ENCODE measurements at regions of chr10 and their contacts with region 1.

Region 1: GRCh38 chr10:27446091-27446918 is 57.8 kb upstream of the RAB18 start:
- DNase-seq: no peak
- H3K4me3 ChIP-seq: no peak overlapping the region
- H3K27ac ChIP-seq: no peak overlapping the region
- H3K4me1 ChIP-seq: no peaks in the 10 kb centered on the region
- H3K27me3 ChIP-seq: no peaks in the 10 kb centered on the region
- CTCF ChIP-seq: peak; percentile 16 to 46 (median 37)

Region 2: GRCh38 chr10:28393966-28394568 is 947.8 kb after region 1 on chr10:
- intact Hi-C with region 1: loop called (anchors 10 kb)
- DNase-seq: peak in 1 of 2 donors; percentile 75
- H3K4me3 ChIP-seq: no peak overlapping the region
- H3K27ac ChIP-seq: no peak overlapping the region
- H3K4me1 ChIP-seq: peaks cover 0 to 3% of the 10 kb centered on the region in 2 donors
- H3K27me3 ChIP-seq: no peaks in the 10 kb centered on the region
- CTCF ChIP-seq: peak; percentile 69 to 89 (median 80)

Measured in ascending aorta (tissue), 2 donors.